ENCODE measurements at regions of chrX and their contacts with region 1.

Region 1: DNA sequence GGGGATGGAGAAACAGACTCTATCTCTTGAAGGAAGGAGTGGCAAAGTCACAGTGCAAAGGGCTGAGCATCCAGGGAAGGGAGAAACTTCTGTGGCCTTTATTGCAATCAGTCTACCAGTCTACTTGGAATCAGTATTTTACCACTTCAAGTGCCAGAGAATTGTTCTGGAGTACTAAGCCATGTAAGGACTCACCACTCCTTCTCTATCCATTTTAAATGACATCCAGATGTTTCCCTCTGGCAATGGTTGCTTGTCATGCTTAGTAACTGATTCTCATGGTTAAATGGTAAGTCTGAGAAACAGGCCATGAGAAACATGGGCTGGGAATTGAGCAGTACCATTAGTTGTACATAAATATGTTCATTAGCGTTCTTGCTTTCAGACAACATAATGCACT is 21.1 kb upstream of the SMIM10 start:
- DNase-seq: no peak
- H3K4me3 ChIP-seq: no peak overlapping the region
- H3K27ac ChIP-seq: no peak overlapping the region
- H3K4me1 ChIP-seq: no peaks in the 10 kb centered on the region
- H3K27me3 ChIP-seq: peaks cover 11% of the 10 kb centered on the region; the same call in 1 of the 2 replicates
- CTCF ChIP-seq: no peak
- EP300 ChIP-seq: no peak
- RAD21 ChIP-seq: no peak

Region 2: DNA sequence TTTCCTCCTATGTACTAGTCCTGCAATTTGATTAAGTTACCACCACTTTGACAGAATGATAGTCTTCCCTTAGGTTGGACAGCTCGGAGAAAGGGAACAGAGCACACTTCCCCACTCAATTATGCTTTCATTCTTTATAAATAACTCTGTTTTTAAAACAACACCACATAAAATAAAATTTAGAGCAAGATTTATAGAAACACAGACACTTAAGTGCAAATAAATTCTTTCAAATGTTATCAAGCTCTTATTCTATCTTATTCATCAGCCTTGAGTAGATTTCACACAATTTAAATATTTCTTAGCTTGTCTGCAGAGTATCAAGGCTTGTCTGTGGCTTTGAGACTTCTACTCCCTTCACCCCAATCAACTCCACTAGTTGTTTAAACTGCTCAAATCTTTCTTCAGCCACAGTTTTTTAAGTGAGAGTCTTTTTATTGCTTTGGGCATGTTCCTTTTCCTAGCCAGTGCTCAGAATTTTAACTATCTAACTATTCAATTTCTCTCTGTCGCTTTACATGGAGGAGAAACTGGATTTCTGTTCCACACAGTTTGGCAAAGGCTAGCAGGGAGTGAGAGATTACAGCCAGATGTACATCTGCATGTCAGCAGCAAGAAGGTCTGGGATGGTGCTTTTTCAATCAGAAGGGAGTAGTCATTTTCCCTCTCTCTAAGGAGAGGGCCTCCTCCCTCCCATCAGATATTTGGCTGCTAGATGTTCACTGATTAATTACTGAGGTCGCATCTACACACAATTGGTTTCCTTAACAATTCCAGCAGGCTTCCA is 258.4 kb before region 1 on chrX:
- CTCF ChIA-PET with region 1: no interaction called
- POLR2A ChIA-PET with region 1: no interaction called
- DNase-seq: peak; percentile 49
- H3K4me3 ChIP-seq: no peak overlapping the region
- H3K27ac ChIP-seq: peak overlapping the region; percentile 20 to 82; a peak in 2 of 4 replicates
- H3K4me1 ChIP-seq: no peaks in the 10 kb centered on the region; a peak in 2 of 4 replicates
- H3K27me3 ChIP-seq: no peaks in the 10 kb centered on the region
- CTCF ChIP-seq: no peak
- EP300 ChIP-seq: no peak; a peak in 1 of 4 replicates
- RAD21 ChIP-seq: no peak

Region 3: GRCh38 chrX:134898440-134898839 is 71.3 kb before region 1 on chrX:
- CTCF ChIA-PET with region 1: no interaction called
- POLR2A ChIA-PET with region 1: no interaction called
- DNase-seq: no peak
- H3K4me3 ChIP-seq: no peak overlapping the region
- H3K27ac ChIP-seq: peak overlapping the region in 1 of 2 experiments; percentile 6; a peak in 1 of 4 replicates
- H3K4me1 ChIP-seq: no peaks in the 10 kb centered on the region; a peak in 1 of 4 replicates
- H3K27me3 ChIP-seq: no peaks in the 10 kb centered on the region
- CTCF ChIP-seq: no peak
- EP300 ChIP-seq: no peak
- RAD21 ChIP-seq: no peak

Region 4: GRCh38 chrX:135003876-135004623 is 34.3 kb after region 1 on chrX:
- CTCF ChIA-PET with region 1: interaction called, 14 read pairs
- POLR2A ChIA-PET with region 1: no interaction called
- DNase-seq: peak; percentile 89
- H3K4me3 ChIP-seq: peak overlapping the region; percentile 51 to 56
- H3K27ac ChIP-seq: peak overlapping the region; percentile 48 to 69; a peak in 3 of 4 replicates
- H3K4me1 ChIP-seq: peaks cover 0 to 9% of the 10 kb centered on the region in 2 experiments; a peak in 2 of 4 replicates
- H3K27me3 ChIP-seq: peaks cover 10% of the 10 kb centered on the region; the same call in 1 of the 2 replicates
- CTCF ChIP-seq: no peak
- EP300 ChIP-seq: no peak
- RAD21 ChIP-seq: no peak

Region 5: DNA sequence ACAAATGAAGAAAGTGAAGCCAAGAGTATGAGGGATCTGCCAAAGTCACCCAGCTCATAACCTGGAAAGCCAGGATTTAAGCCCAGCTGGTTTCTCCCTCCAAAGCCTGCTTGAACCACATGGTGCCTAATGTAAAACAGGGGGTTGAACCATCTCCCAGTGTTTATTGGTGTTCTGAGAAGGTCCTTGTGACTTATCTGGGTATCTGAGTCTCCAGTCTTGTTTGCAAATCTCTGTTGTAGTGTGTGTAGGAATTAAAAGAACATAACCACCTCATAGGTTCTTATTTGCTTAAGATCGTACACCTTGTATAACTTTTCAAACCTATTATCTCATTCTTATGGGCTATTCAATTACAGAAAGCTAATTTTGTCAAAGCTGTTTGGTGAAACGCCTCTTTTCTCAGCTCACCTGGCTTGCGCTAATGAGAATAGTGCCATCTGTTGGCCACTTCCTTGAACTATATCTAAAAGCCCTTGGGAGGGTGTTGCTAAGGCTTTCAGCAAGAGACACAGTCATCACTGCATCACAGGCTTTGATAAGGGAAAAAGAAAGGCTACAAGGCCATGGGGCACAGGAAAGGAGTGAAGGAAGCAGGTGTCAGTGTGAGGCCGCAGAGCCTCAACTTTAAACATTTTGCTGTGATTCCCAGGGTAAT is 116.6 kb after region 1 on chrX:
- CTCF ChIA-PET with region 1: interaction called, 12 read pairs
- POLR2A ChIA-PET with region 1: no interaction called
- DNase-seq: peak; percentile 54
- H3K4me3 ChIP-seq: no peak overlapping the region
- H3K27ac ChIP-seq: no peak overlapping the region
- H3K4me1 ChIP-seq: no peaks in the 10 kb centered on the region
- H3K27me3 ChIP-seq: peaks cover under 1% of the 10 kb centered on the region
- CTCF ChIP-seq: peak; percentile 81
- EP300 ChIP-seq: no peak
- RAD21 ChIP-seq: peak; percentile 66